Thyroid gland (tissue), 4 donors: ENCODE measurements at regions of chr11 and their contacts with region 1.

Region 1: GRCh38 chr11:132028380-132029240 is 658.2 kb downstream of the NTM start:
- DNase-seq: peak in 1 of 2 donors; percentile 56
- H3K4me3 ChIP-seq: no peak overlapping the region
- H3K27ac ChIP-seq: no peak overlapping the region
- H3K4me1 ChIP-seq: no peaks in the 10 kb centered on the region
- H3K27me3 ChIP-seq: no peaks in the 10 kb centered on the region
- CTCF ChIP-seq: peak in 5 of 6 experiments; percentile 48 to 69 (median 56)
- POLR2A ChIP-seq: no peak

Region 2: DNA sequence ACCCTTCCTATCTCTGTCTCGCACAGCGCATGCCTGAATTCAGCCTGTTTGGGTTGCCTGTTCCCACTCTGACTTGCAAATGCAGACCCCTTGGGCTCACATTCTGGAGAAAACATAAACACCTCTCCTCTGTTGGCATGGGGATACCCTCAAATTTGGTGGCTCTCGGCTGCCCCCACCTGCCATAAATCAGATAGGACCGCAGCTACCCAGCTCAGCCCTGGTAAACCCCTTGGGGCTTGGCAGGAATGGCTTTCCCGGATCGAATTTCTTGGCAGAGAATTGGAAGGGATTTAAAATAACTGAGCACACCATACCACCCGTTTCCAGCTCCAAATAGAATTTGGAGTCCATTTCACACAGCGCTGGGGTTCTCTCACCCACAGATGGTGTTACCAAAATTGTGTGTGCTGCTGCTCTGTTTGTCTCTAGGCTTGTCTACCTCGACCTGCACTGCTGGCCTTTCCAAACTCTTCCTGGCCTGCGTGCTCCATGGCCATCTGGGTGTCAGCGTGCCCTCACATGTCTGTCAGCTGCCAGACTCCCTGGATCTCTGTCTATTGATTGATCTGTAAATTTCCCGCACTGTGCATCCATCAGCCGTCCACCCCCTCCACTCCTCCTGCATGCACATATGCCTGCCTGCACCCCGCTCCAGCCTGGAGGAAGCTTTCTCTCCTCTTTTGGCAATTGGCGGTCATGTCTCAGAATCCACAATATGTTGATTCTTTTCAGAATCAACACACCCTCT is 524.2 kb before region 1 on chr11:
- intact Hi-C with region 1: no loop called
- DNase-seq: peak in 1 of 2 donors; percentile 18
- H3K4me3 ChIP-seq: no peak overlapping the region
- H3K27ac ChIP-seq: no peak overlapping the region
- H3K4me1 ChIP-seq: no peaks in the 10 kb centered on the region
- H3K27me3 ChIP-seq: no peaks in the 10 kb centered on the region
- CTCF ChIP-seq: peak in 2 of 6 experiments; percentile 8 to 9
- POLR2A ChIP-seq: no peak

Region 3: DNA sequence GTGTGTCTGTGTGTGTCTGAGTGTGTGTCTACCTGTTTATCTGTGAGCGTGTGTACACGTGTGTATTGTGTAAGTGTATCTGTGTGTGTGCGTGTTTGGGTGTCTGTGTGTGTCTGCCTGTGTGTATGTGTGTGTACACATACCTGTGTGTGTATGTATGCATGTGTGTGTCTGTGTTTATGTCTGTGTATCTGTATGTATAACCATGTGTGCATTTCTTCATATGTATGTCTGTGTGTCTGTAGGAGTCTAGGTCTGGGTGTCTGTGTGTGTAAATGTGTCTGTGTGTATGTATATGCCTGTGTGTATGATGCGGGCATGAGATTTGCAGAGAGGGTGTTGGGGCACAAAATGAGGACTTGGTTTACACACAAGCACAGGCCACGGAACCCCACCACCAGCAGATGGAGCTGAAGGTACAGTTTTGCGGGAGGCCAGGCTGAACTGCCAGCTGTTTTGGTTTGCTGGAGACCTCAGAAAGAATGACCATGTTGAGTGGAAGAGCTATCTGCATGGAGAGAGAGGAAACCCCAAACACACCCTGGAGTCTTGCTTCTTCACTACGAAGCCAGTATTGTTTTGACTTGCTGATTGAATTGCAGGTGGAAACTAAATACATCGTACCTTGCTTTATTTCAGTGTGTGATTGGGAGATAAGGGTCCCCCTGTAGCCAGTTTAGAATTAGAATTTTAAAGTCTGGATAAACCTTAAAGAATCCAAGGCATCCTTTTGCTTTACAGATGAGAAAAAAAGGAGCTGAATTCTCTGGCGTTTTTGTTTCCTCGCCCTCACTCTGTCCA is 161.0 kb before region 1 on chr11:
- intact Hi-C with region 1: loop called (anchors 10 kb)
- DNase-seq: peak; percentile 75 to 81
- H3K4me3 ChIP-seq: no peak overlapping the region
- H3K27ac ChIP-seq: no peak overlapping the region
- H3K4me1 ChIP-seq: no peaks in the 10 kb centered on the region
- H3K27me3 ChIP-seq: no peaks in the 10 kb centered on the region
- CTCF ChIP-seq: peak; percentile 31 to 83 (median 65)
- POLR2A ChIP-seq: no peak

Region 4: DNA sequence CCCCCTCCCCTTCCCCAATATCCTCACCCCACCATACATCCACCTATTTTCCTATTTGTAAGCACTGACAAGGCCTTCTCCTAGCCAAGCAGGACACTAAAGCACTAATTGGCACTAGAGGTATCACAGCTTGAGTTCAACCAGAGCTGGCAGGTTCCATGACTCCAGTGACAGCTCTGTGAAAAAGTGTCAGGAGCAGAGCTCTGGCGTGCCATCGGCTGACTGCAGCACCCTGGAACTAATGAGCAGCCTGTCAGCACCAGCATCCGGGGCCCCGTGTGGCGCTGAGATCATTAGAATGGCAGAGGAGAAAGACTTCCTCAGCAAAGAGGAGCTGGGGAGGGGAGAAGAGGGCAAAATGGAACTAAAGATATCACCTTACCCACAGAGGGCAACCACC is 189.2 kb after region 1 on chr11:
- intact Hi-C with region 1: no loop called
- DNase-seq: no peak
- H3K4me3 ChIP-seq: no peak overlapping the region
- H3K27ac ChIP-seq: no peak overlapping the region
- H3K4me1 ChIP-seq: no peaks in the 10 kb centered on the region
- H3K27me3 ChIP-seq: no peaks in the 10 kb centered on the region
- CTCF ChIP-seq: no peak
- POLR2A ChIP-seq: no peak